Testis (tissue), 5 donors: ENCODE measurements at regions of chr19 and their contacts with region 1.

Region 1: GRCh38 chr19:13597640-13598039 is 91.4 kb upstream of the CACNA1A start:
- DNase-seq: peak; percentile 57
- H3K4me3 ChIP-seq: no peak overlapping the region
- H3K27ac ChIP-seq: no peak overlapping the region
- H3K4me1 ChIP-seq: no peaks in the 10 kb centered on the region
- H3K27me3 ChIP-seq: no peaks in the 10 kb centered on the region
- CTCF ChIP-seq: peak; percentile 35 to 61 (median 48)
- POLR2A ChIP-seq: no peak

Region 2: GRCh38 chr19:13633109-13633508 is 35.5 kb after region 1 on chr19:
- intact Hi-C with region 1: no loop called
- DNase-seq: no peak
- H3K4me3 ChIP-seq: no peak overlapping the region
- H3K27ac ChIP-seq: no peak overlapping the region
- H3K4me1 ChIP-seq: no peaks in the 10 kb centered on the region
- H3K27me3 ChIP-seq: no peaks in the 10 kb centered on the region
- CTCF ChIP-seq: no peak
- POLR2A ChIP-seq: no peak

Region 3: GRCh38 chr19:13652810-13653590 is 55.4 kb after region 1 on chr19:
- intact Hi-C with region 1: no loop called
- DNase-seq: no peak
- H3K4me3 ChIP-seq: no peak overlapping the region
- H3K27ac ChIP-seq: no peak overlapping the region
- H3K4me1 ChIP-seq: no peaks in the 10 kb centered on the region
- H3K27me3 ChIP-seq: no peaks in the 10 kb centered on the region
- CTCF ChIP-seq: no peak
- POLR2A ChIP-seq: no peak

Region 4: DNA sequence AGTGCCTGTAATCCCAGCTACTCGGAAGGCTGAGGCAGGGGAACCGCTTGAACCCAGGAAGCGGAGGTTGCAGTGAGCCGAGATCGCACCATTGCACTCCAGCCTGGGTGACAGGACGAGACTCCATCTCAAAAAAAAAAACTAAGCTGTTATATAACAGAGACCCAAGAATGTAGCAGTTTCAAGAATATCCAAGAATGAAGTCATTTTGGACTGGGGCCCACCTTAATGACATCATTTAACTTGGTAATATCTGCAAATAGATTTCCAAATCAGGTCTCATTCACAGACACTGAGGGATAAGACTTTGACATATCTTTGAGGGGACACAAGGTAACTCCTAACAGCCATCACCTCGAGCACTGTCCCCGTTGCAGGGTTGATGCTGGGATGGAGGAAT is 130.2 kb after region 1 on chr19:
- intact Hi-C with region 1: loop called (anchors 10 kb)
- DNase-seq: no peak
- H3K4me3 ChIP-seq: no peak overlapping the region
- H3K27ac ChIP-seq: no peak overlapping the region
- H3K4me1 ChIP-seq: peaks cover 7% of the 10 kb centered on the region
- H3K27me3 ChIP-seq: no peaks in the 10 kb centered on the region
- CTCF ChIP-seq: no peak
- POLR2A ChIP-seq: no peak

Region 5: DNA sequence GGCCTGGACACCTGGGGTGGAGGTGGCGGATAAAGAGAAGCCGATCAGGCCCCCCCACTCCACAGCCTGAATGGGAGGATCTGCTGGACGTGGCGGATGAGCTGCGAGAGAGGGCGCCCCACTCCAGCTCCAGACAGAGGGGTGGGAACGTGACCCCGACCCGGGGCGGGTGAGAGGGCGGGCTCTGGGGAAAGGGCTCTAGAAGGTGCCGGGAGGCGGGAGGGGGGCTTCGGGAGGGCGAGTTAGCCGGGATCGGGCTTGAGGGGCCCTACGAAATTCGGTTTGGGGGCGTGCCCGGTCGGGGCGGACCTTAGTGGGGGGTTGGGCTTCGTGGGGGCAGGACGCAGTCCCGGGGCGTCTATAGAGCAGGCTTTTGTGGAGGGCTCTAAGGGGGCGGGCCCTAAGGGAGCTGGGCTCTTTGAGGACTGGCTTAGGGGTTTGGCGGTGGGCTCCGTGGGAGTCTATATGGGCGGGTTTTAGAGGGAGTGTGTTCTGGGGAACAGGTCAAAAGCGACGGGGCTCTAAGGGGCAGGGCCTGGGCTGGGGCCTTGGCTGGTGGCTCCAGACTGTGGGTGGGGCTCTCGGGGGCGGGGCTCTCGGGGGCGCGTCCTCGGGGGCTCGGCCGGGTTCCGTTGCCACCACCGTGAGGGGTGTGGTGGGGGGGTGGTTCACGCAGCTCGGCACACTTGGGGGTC is 275.2 kb after region 1 on chr19:
- intact Hi-C with region 1: loop called (anchors 10 kb)
- DNase-seq: no peak
- H3K4me3 ChIP-seq: peak overlapping the region; percentile 42 to 58
- H3K27ac ChIP-seq: peak overlapping the region in 1 of 2 donors; percentile 24
- H3K4me1 ChIP-seq: peaks cover 12% of the 10 kb centered on the region
- H3K27me3 ChIP-seq: no peaks in the 10 kb centered on the region
- CTCF ChIP-seq: no peak
- POLR2A ChIP-seq: no peak